ENCODE measurements at regions of chr1 and their contacts with region 1.

Region 1: GRCh38 chr1:244163861-244164562 is 112.9 kb downstream of the ZBTB18 start:
- DNase-seq: peak; percentile 95
- H3K4me3 ChIP-seq: peak overlapping the region in 1 of 3 experiments; percentile 18
- H3K27ac ChIP-seq: peak overlapping the region; percentile 99
- H3K4me1 ChIP-seq: peaks cover 32% of the 10 kb centered on the region
- H3K27me3 ChIP-seq: no peaks in the 10 kb centered on the region
- CTCF ChIP-seq: no peak
- POLR2A ChIP-seq: peak; percentile 52

Region 2: GRCh38 chr1:243287652-243288051 is 876.4 kb before region 1 on chr1:
- CTCF ChIA-PET with region 1: no interaction called
- POLR2A ChIA-PET with region 1: no interaction called
- dilution Hi-C with region 1: no loop called
- intact Hi-C with region 1: loop called (anchors 5 kb)
- DNase-seq: peak; percentile 95
- H3K4me3 ChIP-seq: peak overlapping the region in 1 of 3 experiments; percentile 0
- H3K27ac ChIP-seq: peak overlapping the region; percentile 98
- H3K4me1 ChIP-seq: peaks cover 46% of the 10 kb centered on the region
- H3K27me3 ChIP-seq: no peaks in the 10 kb centered on the region
- CTCF ChIP-seq: no peak
- POLR2A ChIP-seq: no peak

Region 3: GRCh38 chr1:243850452-243851256 is 313.4 kb before region 1 on chr1:
- CTCF ChIA-PET with region 1: no interaction called
- POLR2A ChIA-PET with region 1: no interaction called
- dilution Hi-C with region 1: no loop called
- intact Hi-C with region 1: loop called (anchors 1 kb)
- DNase-seq: peak; percentile 80
- H3K4me3 ChIP-seq: peak overlapping the region; percentile 36 to 71 (median 61)
- H3K27ac ChIP-seq: peak overlapping the region; percentile 93
- H3K4me1 ChIP-seq: peaks cover 17% of the 10 kb centered on the region
- H3K27me3 ChIP-seq: no peaks in the 10 kb centered on the region
- CTCF ChIP-seq: no peak
- POLR2A ChIP-seq: peak; percentile 28

Region 4: DNA sequence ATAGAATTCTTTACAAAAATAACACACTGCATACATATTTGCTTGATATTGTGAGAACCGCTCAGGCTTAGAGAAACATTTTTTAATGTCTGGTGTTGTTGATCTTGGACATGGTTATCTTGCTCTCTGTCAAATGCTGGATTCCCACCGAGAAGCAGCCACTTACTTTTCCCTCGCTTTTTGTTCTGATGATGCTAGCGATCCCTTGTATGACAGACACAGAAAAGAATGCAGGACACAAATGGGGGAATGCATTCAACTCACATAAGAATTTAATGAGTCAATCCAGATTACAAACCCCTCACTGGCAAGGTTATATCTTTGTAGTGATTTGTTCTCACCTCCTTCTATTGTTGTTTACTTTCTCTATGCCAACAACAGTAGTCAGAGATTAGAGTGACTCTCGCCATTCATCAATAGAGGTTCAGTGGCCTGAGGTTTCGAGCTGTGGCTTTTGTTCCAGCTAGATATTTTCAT is 237.2 kb before region 1 on chr1:
- CTCF ChIA-PET with region 1: no interaction called
- POLR2A ChIA-PET with region 1: no interaction called
- dilution Hi-C with region 1: no loop called
- intact Hi-C with region 1: loop called (anchors 1 kb)
- DNase-seq: peak; percentile 96
- H3K4me3 ChIP-seq: peak overlapping the region in 1 of 3 experiments; percentile 1
- H3K27ac ChIP-seq: peak overlapping the region; percentile 78
- H3K4me1 ChIP-seq: peaks cover 37% of the 10 kb centered on the region
- H3K27me3 ChIP-seq: no peaks in the 10 kb centered on the region
- CTCF ChIP-seq: no peak
- POLR2A ChIP-seq: peak; percentile 64

Region 5: GRCh38 chr1:244151537-244151936 is 12.5 kb before region 1 on chr1:
- CTCF ChIA-PET with region 1: no interaction called
- POLR2A ChIA-PET with region 1: no interaction called
- dilution Hi-C with region 1: no loop called
- intact Hi-C with region 1: no loop called
- DNase-seq: no peak
- H3K4me3 ChIP-seq: no peak overlapping the region
- H3K27ac ChIP-seq: no peak overlapping the region
- H3K4me1 ChIP-seq: no peaks in the 10 kb centered on the region
- H3K27me3 ChIP-seq: no peaks in the 10 kb centered on the region
- CTCF ChIP-seq: no peak
- POLR2A ChIP-seq: no peak

Region 6: DNA sequence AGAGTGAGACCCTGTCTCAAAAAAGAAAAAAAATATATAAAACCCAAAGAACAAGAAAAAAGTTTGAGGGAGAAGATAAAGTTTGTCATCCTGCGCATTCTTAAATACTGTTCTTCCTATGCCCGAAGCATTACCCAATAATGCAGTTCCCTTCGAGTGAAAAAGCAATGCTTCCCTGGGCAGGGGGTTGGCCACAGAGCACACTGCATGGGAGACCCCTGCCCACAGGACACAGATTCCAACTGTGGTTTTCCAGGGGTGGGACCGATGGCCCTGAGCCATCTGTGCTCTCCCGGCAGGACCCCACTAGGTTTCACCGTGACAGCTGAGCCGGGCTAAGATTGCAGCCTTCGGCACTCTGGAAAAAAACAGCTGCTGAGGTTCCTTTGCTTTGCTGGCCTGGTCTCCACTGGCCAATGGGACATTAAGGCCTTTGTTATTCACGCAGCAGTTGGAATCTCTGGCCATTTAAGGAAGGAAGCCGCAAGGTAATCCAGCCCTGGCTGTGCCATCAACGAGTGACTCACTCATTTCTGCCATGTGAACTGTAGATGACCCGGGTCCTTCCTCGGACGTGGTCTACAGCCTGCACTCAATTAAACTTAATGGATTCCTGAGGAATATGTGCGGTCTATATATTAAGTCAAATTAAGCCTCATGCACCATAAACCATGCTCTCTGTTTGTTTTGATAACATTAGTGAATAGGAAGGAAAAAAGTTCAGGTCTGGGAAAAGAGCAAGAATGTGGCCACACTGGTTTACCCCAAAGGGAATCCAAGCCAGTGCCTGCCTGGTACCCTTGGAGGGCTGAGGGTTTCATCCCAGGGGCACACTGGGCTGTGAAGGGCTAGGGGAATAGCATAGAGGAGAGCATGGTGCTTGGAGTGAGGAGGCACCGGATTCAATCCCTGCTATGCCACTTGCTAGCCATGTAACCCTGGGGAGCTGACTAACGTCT is 50.3 kb after region 1 on chr1:
- CTCF ChIA-PET with region 1: no interaction called
- POLR2A ChIA-PET with region 1: no interaction called
- dilution Hi-C with region 1: no loop called
- intact Hi-C with region 1: loop called (anchors 1 kb)
- DNase-seq: peak; percentile 98
- H3K4me3 ChIP-seq: no peak overlapping the region
- H3K27ac ChIP-seq: peak overlapping the region; percentile 84
- H3K4me1 ChIP-seq: peaks cover 16% of the 10 kb centered on the region
- H3K27me3 ChIP-seq: no peaks in the 10 kb centered on the region
- CTCF ChIP-seq: no peak
- POLR2A ChIP-seq: peak; percentile 27

Region 7: DNA sequence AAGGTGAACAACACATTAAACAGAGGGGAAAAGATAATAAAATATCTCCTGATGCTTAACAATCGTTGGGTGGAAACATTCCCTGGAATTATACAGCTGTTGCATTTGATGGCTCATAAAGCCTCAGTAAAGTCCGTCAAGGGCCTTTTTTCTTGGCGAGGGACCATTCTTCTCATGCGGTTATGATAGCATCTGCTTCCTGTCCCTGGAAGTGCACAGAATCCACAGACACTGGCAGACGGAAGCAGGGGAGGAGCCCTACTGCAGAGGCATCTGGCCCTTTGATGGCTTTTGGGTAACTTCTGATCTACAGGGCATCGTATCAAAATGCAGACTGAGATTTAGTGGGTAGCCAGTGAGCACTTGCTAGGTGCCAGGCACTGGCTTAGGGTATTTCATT is 1277.7 kb after region 1 on chr1:
- CTCF ChIA-PET with region 1: no interaction called
- POLR2A ChIA-PET with region 1: no interaction called
- dilution Hi-C with region 1: no loop called
- intact Hi-C with region 1: no loop called
- DNase-seq: no peak
- H3K4me3 ChIP-seq: no peak overlapping the region
- H3K27ac ChIP-seq: no peak overlapping the region
- H3K4me1 ChIP-seq: no peaks in the 10 kb centered on the region
- H3K27me3 ChIP-seq: no peaks in the 10 kb centered on the region
- CTCF ChIP-seq: no peak
- POLR2A ChIP-seq: no peak